Naive thymus-derived CD8-positive, alpha-beta T cell (primary cell): ENCODE measurements at regions of chr3 and their contacts with region 1.

Region 1: DNA sequence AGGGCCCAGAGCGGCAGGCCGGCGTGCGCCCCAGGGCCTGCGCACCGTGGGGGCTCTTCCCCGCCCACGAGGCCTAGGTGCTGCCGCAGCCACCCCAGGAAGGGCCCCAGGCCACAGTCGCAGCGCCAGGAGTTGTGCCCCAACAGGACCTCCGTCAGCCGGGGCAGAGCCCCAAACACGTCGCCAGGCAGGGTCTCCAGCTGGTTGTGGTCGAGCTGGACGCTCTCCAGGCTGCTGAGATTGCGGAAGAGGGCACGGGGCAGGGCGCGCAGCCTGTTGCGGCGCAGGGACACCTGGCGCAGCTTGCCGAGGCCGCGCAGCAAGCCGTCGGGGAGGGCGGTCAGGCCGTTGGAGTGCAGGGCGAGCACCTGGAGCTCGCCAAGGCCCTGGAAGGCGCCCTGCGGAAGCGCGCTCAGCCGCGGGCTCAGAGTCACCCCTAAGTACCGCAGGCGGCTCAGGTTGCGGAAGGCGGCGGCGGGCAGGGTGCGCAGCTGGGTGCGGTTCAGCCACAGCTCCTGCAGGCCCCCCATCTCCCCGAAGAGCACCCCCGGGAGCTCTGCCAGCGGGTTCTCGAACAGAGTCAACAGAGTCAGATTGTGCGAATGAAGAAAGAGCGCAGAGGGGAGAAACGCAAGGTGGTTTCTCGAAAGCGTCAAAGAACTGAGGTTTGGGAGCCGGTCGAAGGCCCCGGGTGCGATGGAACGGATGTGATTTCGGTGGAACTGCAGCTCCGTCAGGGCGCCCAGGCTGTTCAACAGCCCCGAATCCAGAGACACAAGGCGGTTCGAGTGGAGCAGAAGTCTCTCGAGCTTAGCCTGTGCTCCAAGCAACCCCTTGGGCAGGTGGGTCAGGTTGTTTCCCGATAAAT is 1.9 kb downstream of the GP5 start:
- DNase-seq: peak; percentile 22 to 77 (median 52)
- ATAC-seq: peak; percentile 60 to 62
- H3K4me3 Mint-ChIP-seq: peak overlapping the region; percentile 86 to 97 (median 90)
- H3K27ac Mint-ChIP-seq: peak overlapping the region; percentile 84 to 97 (median 92)
- H3K4me1 Mint-ChIP-seq: peaks cover 26 to 59% (median 50%) of the 10 kb centered on the region in 4 donors
- H3K27me3 Mint-ChIP-seq: peaks cover 0 to 11% (median 0%) of the 10 kb centered on the region in 5 donors

Region 2: DNA sequence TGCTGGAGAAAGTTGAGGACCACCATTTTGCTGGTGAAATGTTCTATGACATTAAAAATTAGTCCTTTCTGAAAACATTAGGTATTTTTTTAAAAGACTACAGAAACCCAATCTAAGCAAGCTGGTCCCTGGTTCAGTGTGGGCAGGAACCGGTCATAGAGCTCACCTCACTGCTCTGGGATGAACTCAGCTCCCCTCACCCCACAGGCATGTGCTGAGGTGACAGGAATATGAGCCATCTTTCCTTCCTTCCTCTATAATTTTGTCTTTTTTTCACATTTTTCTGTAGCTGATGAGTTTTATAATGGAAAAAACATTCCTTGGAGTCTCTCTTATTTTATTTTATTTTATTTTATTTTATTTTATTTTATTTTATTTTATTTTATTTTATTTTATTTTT is 19.4 kb before region 1 on chr3:
- POLR2A ChIA-PET with region 1: interaction called, 10 read pairs
- DNase-seq: peak in 1 of 10 donors; percentile 14
- ATAC-seq: no peak
- H3K4me3 Mint-ChIP-seq: no peak overlapping the region
- H3K27ac Mint-ChIP-seq: no peak overlapping the region
- H3K4me1 Mint-ChIP-seq: peaks cover 0 to 6% (median 0%) of the 10 kb centered on the region in 4 donors
- H3K27me3 Mint-ChIP-seq: peaks cover 5 to 15% (median 11%) of the 10 kb centered on the region in 5 donors

Region 3: GRCh38 chr3:194583604-194584318 is 186.6 kb after region 1 on chr3:
- POLR2A ChIA-PET with region 1: interaction called, 10 read pairs
- DNase-seq: peak; percentile 83 to 95 (median 90)
- ATAC-seq: peak; percentile 92 to 93
- H3K4me3 Mint-ChIP-seq: peak overlapping the region; percentile 89 to 95 (median 93)
- H3K27ac Mint-ChIP-seq: peak overlapping the region; percentile 94 to 98 (median 96)
- H3K4me1 Mint-ChIP-seq: peaks cover 9 to 16% (median 14%) of the 10 kb centered on the region in 4 donors
- H3K27me3 Mint-ChIP-seq: no peaks in the 10 kb centered on the region